Caco-2 (cell line): ENCODE measurements at regions of chr4 and their contacts with region 1.

Region 1: GRCh38 chr4:70839589-70840093 is at the start of gene GRSF1:
- DNase-seq: peak; percentile 93 to 95
- H3K4me3 ChIP-seq: peak within 1 kb of the TSS; percentile 88
- H3K4me3 Mint-ChIP-seq: peak within 1 kb of the TSS; percentile 98
- H3K27ac Mint-ChIP-seq: peak within 1 kb of the TSS; percentile 90
- H3K4me1 ChIP-seq: no peaks in the 10 kb centered on the region
- H3K4me1 Mint-ChIP-seq: peaks cover 9% of the 10 kb centered on the region
- H3K27me3 ChIP-seq: no peaks in the 10 kb centered on the region
- H3K27me3 Mint-ChIP-seq: no peaks in the 10 kb centered on the region
- CTCF ChIP-seq: no peak
- total RNA-seq, gene GRSF1: 72.3 and 76.1 TPM in 2 replicates

Region 2: GRCh38 chr4:70874268-70875156 is 34.9 kb after region 1 on chr4:
- CTCF ChIA-PET with region 1: no interaction called
- POLR2A ChIA-PET with region 1: interaction called, 12 read pairs
- intact Hi-C with region 1: no loop called
- DNase-seq: no peak
- H3K4me3 ChIP-seq: no peak overlapping the region
- H3K4me3 Mint-ChIP-seq: no peak overlapping the region
- H3K27ac Mint-ChIP-seq: no peak overlapping the region
- H3K4me1 ChIP-seq: no peaks in the 10 kb centered on the region
- H3K4me1 Mint-ChIP-seq: no peaks in the 10 kb centered on the region
- H3K27me3 ChIP-seq: no peaks in the 10 kb centered on the region
- H3K27me3 Mint-ChIP-seq: no peaks in the 10 kb centered on the region
- CTCF ChIP-seq: no peak

Region 3: GRCh38 chr4:70901984-70902576 is 62.4 kb after region 1 on chr4 and contains the start of gene MOB1B:
- CTCF ChIA-PET with region 1: interaction called, 7 read pairs
- POLR2A ChIA-PET with region 1: interaction called, 5 read pairs
- intact Hi-C with region 1: loop called (anchors 1 kb)
- DNase-seq: peak; percentile 88 to 91
- H3K4me3 ChIP-seq: peak within 1 kb of the TSS; percentile 55
- H3K4me3 Mint-ChIP-seq: peak within 1 kb of the TSS; percentile 97
- H3K27ac Mint-ChIP-seq: peak within 1 kb of the TSS; percentile 94
- H3K4me1 ChIP-seq: no peaks in the 10 kb centered on the region
- H3K4me1 Mint-ChIP-seq: peaks cover 7% of the 10 kb centered on the region
- H3K27me3 ChIP-seq: no peaks in the 10 kb centered on the region
- H3K27me3 Mint-ChIP-seq: no peaks in the 10 kb centered on the region
- CTCF ChIP-seq: peak; percentile 45 to 53
- total RNA-seq, gene MOB1B: 23.3 and 23.6 TPM in 2 replicates

Region 4: DNA sequence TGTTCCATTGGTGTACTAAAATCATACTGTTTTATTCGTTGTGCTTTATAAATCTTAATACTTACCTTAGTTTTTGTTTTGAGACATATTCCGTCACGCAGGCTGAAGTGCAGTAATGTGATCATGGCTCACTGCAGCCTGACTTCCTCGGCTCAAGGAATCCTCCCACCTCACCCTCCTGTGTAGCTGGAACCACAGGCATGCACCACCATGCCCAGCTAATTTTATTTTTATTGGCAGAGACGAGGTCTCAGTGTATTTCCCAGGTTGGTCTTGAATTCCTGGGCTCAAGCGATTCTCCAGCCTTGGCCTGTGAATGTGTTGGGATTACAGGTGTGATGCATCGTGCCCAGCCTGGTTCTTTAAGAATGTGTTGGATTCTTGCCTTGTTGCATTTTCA is 129.4 kb after region 1 on chr4:
- CTCF ChIA-PET with region 1: interaction called, 10 read pairs
- POLR2A ChIA-PET with region 1: no interaction called
- intact Hi-C with region 1: no loop called
- DNase-seq: no peak
- H3K4me3 ChIP-seq: no peak overlapping the region
- H3K4me3 Mint-ChIP-seq: no peak overlapping the region
- H3K27ac Mint-ChIP-seq: no peak overlapping the region
- H3K4me1 ChIP-seq: no peaks in the 10 kb centered on the region
- H3K4me1 Mint-ChIP-seq: peaks cover 24% of the 10 kb centered on the region
- H3K27me3 ChIP-seq: no peaks in the 10 kb centered on the region
- H3K27me3 Mint-ChIP-seq: no peaks in the 10 kb centered on the region
- CTCF ChIP-seq: no peak

Region 5: DNA sequence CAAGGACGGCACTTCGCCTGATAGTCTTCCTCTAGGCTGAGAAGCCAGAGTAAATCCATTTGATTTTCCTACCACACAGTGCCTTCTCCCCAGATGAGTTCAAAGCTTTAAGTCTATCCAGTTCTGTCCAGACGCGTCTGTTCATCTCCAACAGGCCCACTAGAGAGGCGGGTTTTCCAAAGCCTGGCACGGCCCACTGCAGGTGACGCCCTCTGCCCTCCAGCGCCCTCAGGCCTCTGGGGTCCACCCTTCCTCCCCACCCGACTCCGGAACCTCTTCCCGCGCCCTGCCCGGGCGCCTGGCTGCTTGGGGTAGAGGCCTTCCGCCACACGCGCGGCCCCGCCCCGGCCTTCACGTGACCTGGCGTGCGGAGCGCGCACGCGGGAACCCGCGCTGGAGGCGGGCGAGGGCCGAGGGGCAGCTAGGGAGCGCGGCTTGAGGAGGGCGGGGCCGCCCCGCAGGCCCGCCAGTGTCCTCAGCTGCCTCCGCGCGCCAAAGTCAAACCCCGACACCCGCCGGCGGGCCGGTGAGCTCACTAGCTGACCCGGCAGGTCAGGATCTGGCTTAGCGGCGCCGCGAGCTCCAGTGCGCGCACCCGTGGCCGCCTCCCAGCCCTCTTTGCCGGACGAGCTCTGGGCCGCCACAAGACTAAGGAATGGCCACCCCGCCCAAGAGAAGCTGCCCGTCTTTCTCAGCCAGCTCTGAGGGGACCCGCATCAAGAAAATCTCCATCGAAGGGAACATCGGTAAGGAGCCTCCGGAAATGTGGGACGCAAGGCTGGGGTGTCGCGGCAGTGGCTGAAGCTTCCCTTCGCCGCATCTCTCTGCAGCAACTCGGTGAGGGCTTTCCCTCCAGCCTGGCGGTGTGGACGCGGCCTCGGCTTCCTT is 153.8 kb after region 1 on chr4 and contains the start of gene DCK:
- CTCF ChIA-PET with region 1: interaction called, 5 read pairs
- POLR2A ChIA-PET with region 1: interaction called, 5 read pairs
- intact Hi-C with region 1: loop called (anchors 5 kb)
- DNase-seq: peak; percentile 93 to 96
- H3K4me3 ChIP-seq: peak within 1 kb of the TSS; percentile 83
- H3K4me3 Mint-ChIP-seq: peak within 1 kb of the TSS; percentile 91
- H3K27ac Mint-ChIP-seq: peak within 1 kb of the TSS; percentile 88
- H3K4me1 ChIP-seq: peaks cover 9% of the 10 kb centered on the region
- H3K4me1 Mint-ChIP-seq: peaks cover 18% of the 10 kb centered on the region
- H3K27me3 ChIP-seq: no peaks in the 10 kb centered on the region
- H3K27me3 Mint-ChIP-seq: no peaks in the 10 kb centered on the region
- CTCF ChIP-seq: no peak
- total RNA-seq, gene DCK: 16.3 and 19.6 TPM in 2 replicates

Region 6: DNA sequence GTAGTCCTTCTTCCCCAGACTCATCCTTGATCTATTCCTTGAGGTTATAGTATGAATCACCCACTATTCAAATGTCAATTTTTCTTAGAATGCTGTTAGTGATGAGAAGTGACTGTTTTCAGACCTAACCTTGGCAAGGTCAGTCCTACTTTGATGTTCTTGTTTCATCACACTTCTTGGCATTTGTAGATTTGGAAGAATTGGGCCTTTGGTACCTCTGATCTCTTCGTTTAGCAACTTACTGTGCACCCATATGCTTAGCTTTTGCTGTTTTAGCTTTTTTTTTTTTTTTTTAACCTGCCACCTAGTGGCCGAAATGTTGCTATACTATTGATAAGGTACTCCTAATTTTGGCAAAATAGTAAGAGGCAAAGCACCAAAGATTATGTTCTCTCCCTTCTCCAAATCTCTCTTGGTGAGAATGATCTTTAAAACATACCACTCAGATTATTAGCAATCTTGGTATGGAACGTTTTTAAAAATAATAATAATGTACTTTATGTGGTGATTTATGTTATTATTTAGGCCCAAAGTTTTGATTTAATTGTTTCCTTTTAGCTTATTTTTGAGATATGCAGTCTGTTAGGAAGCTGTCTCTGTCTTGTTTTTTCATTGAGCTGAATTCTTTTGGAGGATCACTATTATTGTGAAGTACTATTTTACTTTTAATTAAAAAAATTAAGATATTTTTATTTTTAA is 170.4 kb after region 1 on chr4:
- CTCF ChIA-PET with region 1: interaction called, 10 read pairs
- POLR2A ChIA-PET with region 1: interaction called, 5 read pairs
- intact Hi-C with region 1: loop called (anchors 5 kb)
- DNase-seq: peak in 1 of 2 experiments; percentile 43
- H3K4me3 ChIP-seq: no peak overlapping the region
- H3K4me3 Mint-ChIP-seq: no peak overlapping the region
- H3K27ac Mint-ChIP-seq: no peak overlapping the region
- H3K4me1 ChIP-seq: no peaks in the 10 kb centered on the region
- H3K4me1 Mint-ChIP-seq: no peaks in the 10 kb centered on the region
- H3K27me3 ChIP-seq: no peaks in the 10 kb centered on the region
- H3K27me3 Mint-ChIP-seq: no peaks in the 10 kb centered on the region
- CTCF ChIP-seq: peak; percentile 53 to 68